IMR-90 (cell line): ENCODE measurements at regions of chr7 and their contacts with region 1.

Region 1: GRCh38 chr7:152189061-152189460 is 163.6 kb downstream of the GALNT11 start:
- DNase-seq: no peak
- ATAC-seq: no peak
- H3K4me3 ChIP-seq: no peak overlapping the region
- H3K27ac ChIP-seq: no peak overlapping the region
- H3K4me1 ChIP-seq: peaks cover 2% of the 10 kb centered on the region; the same call in 1 of the 2 replicates
- H3K27me3 ChIP-seq: no peaks in the 10 kb centered on the region
- CTCF ChIP-seq: no peak
- POLR2A ChIP-seq: no peak
- RAD21 ChIP-seq: no peak

Region 2: DNA sequence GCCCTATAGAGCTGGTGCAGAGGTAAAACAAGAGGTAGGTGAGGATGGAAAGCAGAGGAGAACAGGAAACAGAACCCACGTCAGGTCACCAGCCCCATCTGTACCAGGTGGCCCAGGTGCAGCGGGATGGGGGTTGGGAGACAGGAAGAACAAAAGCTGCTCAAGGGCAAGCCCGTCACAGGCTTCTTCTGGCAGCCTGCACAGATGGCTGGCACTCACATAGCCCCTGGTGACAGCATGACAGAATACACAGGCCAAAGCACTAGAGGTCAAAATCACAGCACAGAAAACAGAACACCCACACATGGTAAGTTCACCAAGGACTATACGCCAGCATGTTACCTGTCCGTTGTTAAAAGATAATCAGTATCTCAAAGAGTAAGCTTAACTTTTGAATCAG is 36.8 kb before region 1 on chr7:
- CTCF ChIA-PET with region 1: no interaction called
- POLR2A ChIA-PET with region 1: no interaction called
- dilution Hi-C with region 1: no loop called
- in situ Hi-C with region 1: no loop called
- intact Hi-C with region 1: loop called (anchors 5 kb)
- DNase-seq: no peak
- ATAC-seq: no peak
- H3K4me3 ChIP-seq: no peak overlapping the region
- H3K27ac ChIP-seq: no peak overlapping the region
- H3K4me1 ChIP-seq: no peaks in the 10 kb centered on the region
- H3K27me3 ChIP-seq: no peaks in the 10 kb centered on the region
- CTCF ChIP-seq: no peak
- POLR2A ChIP-seq: no peak
- RAD21 ChIP-seq: no peak

Region 3: DNA sequence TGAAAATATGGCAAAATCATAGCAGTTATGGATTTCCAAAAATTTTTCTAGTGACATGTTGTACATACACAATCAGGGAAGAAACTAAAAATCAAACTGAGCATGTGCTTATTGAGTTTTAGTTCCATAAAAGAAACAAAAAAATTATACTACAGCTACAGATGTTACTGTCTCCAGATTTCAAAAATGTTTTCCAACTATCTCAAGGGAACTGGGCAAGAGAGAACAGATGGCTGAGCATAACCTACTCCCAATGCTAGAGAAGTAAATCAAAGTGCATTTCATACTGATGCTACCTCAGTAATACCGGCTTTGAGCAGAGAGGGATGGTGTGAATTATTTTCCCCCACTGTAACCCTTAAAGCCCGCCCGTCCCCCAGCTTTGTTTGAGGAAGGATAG is 287.5 kb after region 1 on chr7:
- CTCF ChIA-PET with region 1: no interaction called
- POLR2A ChIA-PET with region 1: no interaction called
- dilution Hi-C with region 1: no loop called
- in situ Hi-C with region 1: no loop called
- intact Hi-C with region 1: no loop called
- DNase-seq: no peak
- ATAC-seq: no peak
- H3K4me3 ChIP-seq: no peak overlapping the region
- H3K27ac ChIP-seq: no peak overlapping the region
- H3K4me1 ChIP-seq: no peaks in the 10 kb centered on the region
- H3K27me3 ChIP-seq: no peaks in the 10 kb centered on the region
- CTCF ChIP-seq: no peak
- POLR2A ChIP-seq: no peak
- RAD21 ChIP-seq: no peak